Activated CD8-positive, alpha-beta memory T cell treated with anti-CD3 and anti-CD28 coated beads, Interleukin-2, amount 10 ng/mL, durations not matched to agents 7 days and 5 days (primary cell): ENCODE measurements at regions of chr20 and their contacts with region 1.

Region 1: GRCh38 chr20:64106981-64107735 is at the start of gene NPBWR2:
- DNase-seq: peak; percentile 43
- ATAC-seq: peak; percentile 70
- H3K4me3 Mint-ChIP-seq: no peak within 1 kb of the TSS
- H3K27ac Mint-ChIP-seq: no peak within 1 kb of the TSS
- H3K4me1 Mint-ChIP-seq: peaks cover 5% of the 10 kb centered on the region
- H3K27me3 Mint-ChIP-seq: peaks cover 14% of the 10 kb centered on the region
- total RNA-seq, gene NPBWR2: not detected

Region 2: GRCh38 chr20:64091770-64092169 is 15.4 kb before region 1 on chr20:
- CTCF ChIA-PET with region 1: no interaction called
- DNase-seq: no peak
- ATAC-seq: no peak
- H3K4me3 Mint-ChIP-seq: no peak overlapping the region
- H3K27ac Mint-ChIP-seq: no peak overlapping the region
- H3K4me1 Mint-ChIP-seq: no peaks in the 10 kb centered on the region
- H3K27me3 Mint-ChIP-seq: no peaks in the 10 kb centered on the region

Region 3: DNA sequence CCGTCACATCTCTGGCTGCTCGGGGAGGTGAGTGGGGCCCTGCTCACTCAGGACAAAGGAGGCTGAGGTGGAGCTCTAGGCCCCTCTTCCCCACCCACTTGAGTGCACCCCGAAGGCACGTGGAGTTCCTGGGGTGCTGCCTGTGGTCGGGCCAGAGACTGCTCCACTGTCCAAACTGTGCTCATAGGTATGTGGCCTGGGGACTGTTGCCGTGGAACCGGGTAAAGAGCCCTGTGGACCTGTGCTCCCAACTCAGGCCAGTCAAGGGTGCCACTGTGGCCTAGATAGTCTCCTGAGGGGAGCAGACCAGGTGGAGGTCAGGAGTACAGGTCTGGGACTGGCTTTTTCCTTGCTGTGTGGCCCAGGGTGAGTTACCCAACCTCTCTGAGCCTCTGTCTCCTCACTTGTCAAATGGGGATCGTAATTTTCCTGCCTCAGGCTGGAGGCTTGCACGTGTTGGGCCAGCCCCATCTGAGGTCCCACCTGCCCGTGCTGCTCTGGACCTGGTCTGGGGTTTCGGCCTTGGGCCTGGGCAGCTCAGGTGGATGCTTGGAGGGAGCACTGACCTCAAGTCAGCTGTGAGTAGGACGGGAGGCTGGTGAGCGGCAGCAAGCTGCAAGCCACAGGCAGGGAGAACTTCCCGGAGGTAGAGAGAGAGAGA is 12.7 kb after region 1 on chr20:
- CTCF ChIA-PET with region 1: interaction called, 10 read pairs
- DNase-seq: no peak
- ATAC-seq: peak; percentile 14
- H3K4me3 Mint-ChIP-seq: peak overlapping the region; percentile 5
- H3K27ac Mint-ChIP-seq: peak overlapping the region; percentile 42
- H3K4me1 Mint-ChIP-seq: peaks cover 10% of the 10 kb centered on the region
- H3K27me3 Mint-ChIP-seq: peaks cover 28% of the 10 kb centered on the region

Region 4: DNA sequence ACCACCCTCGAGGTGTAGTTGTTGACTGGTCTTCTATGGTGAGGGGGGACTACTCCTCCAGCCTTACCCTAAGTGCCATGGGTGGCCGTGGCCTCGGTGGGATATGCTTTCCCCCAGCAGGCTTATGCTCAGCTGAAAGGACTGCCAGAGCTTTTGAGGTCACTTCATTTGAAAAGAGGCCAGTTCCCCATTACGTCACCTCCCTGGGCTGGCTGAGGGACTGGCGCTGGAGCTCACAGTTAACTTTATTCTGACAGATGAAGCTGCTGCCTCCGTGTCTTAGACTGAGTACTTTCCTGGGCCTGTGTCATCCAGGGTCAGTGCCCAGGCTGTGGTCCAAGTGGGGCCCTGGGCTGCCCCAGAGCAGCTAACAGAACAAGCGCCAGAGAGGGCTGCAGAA is 105.6 kb after region 1 on chr20:
- CTCF ChIA-PET with region 1: no interaction called
- DNase-seq: no peak
- ATAC-seq: no peak
- H3K4me3 Mint-ChIP-seq: no peak overlapping the region
- H3K27ac Mint-ChIP-seq: no peak overlapping the region
- H3K4me1 Mint-ChIP-seq: no peaks in the 10 kb centered on the region
- H3K27me3 Mint-ChIP-seq: no peaks in the 10 kb centered on the region